ENCODE measurements at regions of chr17 and their contacts with region 1.

Region 1: DNA sequence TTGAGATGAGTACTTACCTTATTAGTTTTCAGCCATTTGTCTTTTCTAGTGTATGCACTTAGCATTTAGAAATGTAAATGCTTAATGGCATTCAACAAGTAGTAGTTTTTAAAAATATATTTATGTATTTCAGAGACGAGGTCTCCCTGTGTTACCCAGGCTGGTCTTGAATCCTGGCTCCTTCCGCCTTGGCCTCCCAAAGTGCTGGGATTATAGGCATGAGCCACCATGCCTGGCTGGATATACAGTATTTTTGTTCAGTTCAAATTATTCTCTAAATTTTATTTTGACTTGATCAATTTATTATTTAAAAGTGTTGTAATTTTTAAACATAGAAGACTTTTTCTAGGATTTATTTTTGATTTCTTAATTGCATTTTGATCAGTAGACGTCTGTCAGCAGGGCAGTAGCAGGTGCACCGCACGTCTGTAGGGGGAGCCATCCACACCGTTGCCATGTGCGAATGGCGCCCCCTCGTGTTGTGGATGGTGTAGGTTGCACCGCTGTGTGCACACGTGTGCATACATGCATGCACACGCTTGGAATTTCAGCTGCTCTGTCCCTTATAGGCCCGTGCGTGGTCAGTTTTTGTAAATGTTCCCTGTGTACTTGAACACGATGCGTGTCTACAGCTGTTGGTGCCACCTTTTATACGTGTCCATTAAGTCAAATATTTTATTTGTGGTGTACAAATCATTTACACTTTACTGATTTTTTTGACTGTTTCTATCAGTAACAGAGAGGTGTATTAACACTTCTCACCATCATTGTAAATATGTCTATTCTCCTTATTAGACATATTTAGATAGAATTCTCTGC is 30.6 kb downstream of the RPTOR start:
- DNase-seq: peak; percentile 95
- ATAC-seq: peak; percentile 99 to 100
- H3K4me3 ChIP-seq: no peak overlapping the region
- H3K27ac ChIP-seq: no peak overlapping the region
- H3K4me1 ChIP-seq: no peaks in the 10 kb centered on the region
- CTCF ChIP-seq: peak; percentile 100
- EP300 ChIP-seq: no peak
- POLR2A ChIP-seq: no peak
- RAD21 ChIP-seq: peak; percentile 99

Region 2: DNA sequence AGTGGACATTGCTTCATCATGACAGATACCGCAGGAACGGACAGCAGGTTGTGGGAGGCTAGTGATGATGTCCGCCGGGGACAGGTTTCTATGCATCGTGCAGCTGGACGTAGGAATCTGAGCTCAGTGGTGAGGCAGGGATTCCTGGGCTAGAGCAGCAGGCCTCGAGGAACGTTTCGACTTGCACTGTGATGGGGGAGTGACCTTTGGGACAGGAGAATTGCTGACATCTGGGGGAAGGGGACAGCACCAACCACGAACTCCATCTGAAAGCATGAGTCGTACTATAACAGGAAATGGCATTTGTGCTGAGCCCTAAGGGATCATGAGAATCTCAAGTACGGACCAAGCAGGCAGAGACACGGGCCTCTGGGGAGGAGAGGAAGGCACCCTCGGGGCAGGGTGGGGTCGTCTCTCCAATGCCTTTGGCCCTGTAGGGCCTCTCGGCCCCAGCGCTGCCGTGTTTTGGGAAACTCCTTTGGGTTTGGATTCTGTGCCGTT is 226.1 kb before region 1 on chr17:
- CTCF ChIA-PET with region 1: no interaction called
- POLR2A ChIA-PET with region 1: no interaction called
- DNase-seq: no peak
- ATAC-seq: no peak
- H3K4me3 ChIP-seq: no peak overlapping the region
- H3K27ac ChIP-seq: no peak overlapping the region
- H3K4me1 ChIP-seq: no peaks in the 10 kb centered on the region
- CTCF ChIP-seq: no peak
- EP300 ChIP-seq: no peak
- POLR2A ChIP-seq: no peak
- RAD21 ChIP-seq: no peak

Region 3: DNA sequence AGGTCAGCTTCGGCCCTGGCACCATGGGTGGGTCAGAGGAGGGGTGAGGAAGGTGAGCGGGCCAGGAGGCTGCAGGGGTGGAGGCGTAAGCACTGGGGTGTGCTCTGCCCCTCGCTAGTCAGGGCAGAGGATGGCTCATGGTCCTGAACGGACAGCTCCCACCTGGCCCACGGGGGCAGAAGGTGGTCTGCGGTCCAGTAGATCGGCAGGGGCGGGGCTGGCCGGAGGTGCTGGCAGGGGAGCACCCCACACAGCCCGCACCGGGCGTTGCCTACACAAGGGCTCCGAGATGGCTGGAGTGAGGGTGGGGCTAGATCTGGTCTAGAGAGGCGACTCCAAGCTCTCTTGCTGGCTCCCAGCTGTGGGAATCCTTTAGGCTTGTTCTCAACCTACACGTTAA is 107.0 kb before region 1 on chr17:
- CTCF ChIA-PET with region 1: interaction called, 25 read pairs
- POLR2A ChIA-PET with region 1: no interaction called
- DNase-seq: no peak
- ATAC-seq: no peak
- H3K4me3 ChIP-seq: no peak overlapping the region
- H3K27ac ChIP-seq: no peak overlapping the region
- H3K4me1 ChIP-seq: no peaks in the 10 kb centered on the region
- CTCF ChIP-seq: no peak
- EP300 ChIP-seq: no peak
- POLR2A ChIP-seq: no peak
- RAD21 ChIP-seq: no peak

Region 4: GRCh38 chr17:80477647-80478478 is 97.4 kb before region 1 on chr17:
- CTCF ChIA-PET with region 1: interaction called, 53 read pairs
- POLR2A ChIA-PET with region 1: no interaction called
- DNase-seq: peak; percentile 70 to 75
- ATAC-seq: peak; percentile 20 to 70; a peak in 3 of 6 replicates
- H3K4me3 ChIP-seq: peak overlapping the region; percentile 54
- H3K27ac ChIP-seq: peak overlapping the region; percentile 60 to 80
- H3K4me1 ChIP-seq: peaks cover 56% of the 10 kb centered on the region
- CTCF ChIP-seq: peak; percentile 67
- EP300 ChIP-seq: no peak
- POLR2A ChIP-seq: no peak
- RAD21 ChIP-seq: peak; percentile 77 to 90

Region 5: GRCh38 chr17:80545499-80545826 is 29.8 kb before region 1 on chr17:
- CTCF ChIA-PET with region 1: interaction called, 11 read pairs
- POLR2A ChIA-PET with region 1: no interaction called
- DNase-seq: peak in 1 of 2 experiments; percentile 53
- ATAC-seq: peak in 1 of 2 experiments; percentile 11; a peak in 3 of 6 replicates
- H3K4me3 ChIP-seq: peak overlapping the region; percentile 82
- H3K27ac ChIP-seq: peak overlapping the region; percentile 83 to 91
- H3K4me1 ChIP-seq: peaks cover 29% of the 10 kb centered on the region
- CTCF ChIP-seq: no peak
- EP300 ChIP-seq: no peak
- POLR2A ChIP-seq: no peak
- RAD21 ChIP-seq: no peak

Region 6: GRCh38 chr17:80559825-80560251 is 15.4 kb before region 1 on chr17:
- CTCF ChIA-PET with region 1: interaction called, 73 read pairs
- POLR2A ChIA-PET with region 1: no interaction called
- DNase-seq: no peak
- ATAC-seq: no peak
- H3K4me3 ChIP-seq: no peak overlapping the region
- H3K27ac ChIP-seq: no peak overlapping the region
- H3K4me1 ChIP-seq: no peaks in the 10 kb centered on the region
- CTCF ChIP-seq: no peak
- EP300 ChIP-seq: no peak
- POLR2A ChIP-seq: no peak
- RAD21 ChIP-seq: no peak

Region 7: DNA sequence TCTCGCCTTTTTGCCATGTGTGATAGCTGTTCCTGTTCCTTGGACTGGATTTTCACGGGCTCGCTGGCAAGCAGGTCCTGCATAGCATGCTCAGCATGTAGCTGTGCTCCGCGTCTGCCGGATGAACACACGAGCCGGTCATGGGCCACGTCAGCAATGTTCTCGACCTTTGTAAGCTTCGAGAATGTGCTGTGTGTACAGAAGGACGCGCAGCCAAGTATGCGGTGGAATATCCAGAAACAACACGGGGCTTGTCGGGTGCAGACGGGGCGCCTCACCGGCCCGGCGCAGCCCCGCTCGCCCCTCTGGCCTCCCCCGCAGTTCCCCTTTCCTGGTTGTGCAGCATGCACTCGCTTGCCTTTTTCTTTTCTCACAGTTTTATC is 11.6 kb after region 1 on chr17:
- CTCF ChIA-PET with region 1: interaction called, 59 read pairs
- POLR2A ChIA-PET with region 1: no interaction called
- DNase-seq: no peak
- ATAC-seq: no peak
- H3K4me3 ChIP-seq: no peak overlapping the region
- H3K27ac ChIP-seq: no peak overlapping the region
- H3K4me1 ChIP-seq: no peaks in the 10 kb centered on the region
- CTCF ChIP-seq: no peak
- EP300 ChIP-seq: no peak
- POLR2A ChIP-seq: no peak
- RAD21 ChIP-seq: no peak

Region 8: GRCh38 chr17:80605326-80606066 is 30.2 kb after region 1 on chr17:
- CTCF ChIA-PET with region 1: interaction called, 10 read pairs
- POLR2A ChIA-PET with region 1: no interaction called
- DNase-seq: peak; percentile 23 to 40
- ATAC-seq: peak in 1 of 2 experiments; percentile 49; a peak in 3 of 6 replicates
- H3K4me3 ChIP-seq: no peak overlapping the region
- H3K27ac ChIP-seq: no peak overlapping the region
- H3K4me1 ChIP-seq: peaks cover 12% of the 10 kb centered on the region
- CTCF ChIP-seq: no peak
- EP300 ChIP-seq: no peak
- POLR2A ChIP-seq: no peak
- RAD21 ChIP-seq: no peak

Measured in A549 (cell line).